Dorsolateral prefrontal cortex (tissue), 120 donors: ENCODE measurements at regions of chrX and their contacts with region 1.

Region 1: DNA sequence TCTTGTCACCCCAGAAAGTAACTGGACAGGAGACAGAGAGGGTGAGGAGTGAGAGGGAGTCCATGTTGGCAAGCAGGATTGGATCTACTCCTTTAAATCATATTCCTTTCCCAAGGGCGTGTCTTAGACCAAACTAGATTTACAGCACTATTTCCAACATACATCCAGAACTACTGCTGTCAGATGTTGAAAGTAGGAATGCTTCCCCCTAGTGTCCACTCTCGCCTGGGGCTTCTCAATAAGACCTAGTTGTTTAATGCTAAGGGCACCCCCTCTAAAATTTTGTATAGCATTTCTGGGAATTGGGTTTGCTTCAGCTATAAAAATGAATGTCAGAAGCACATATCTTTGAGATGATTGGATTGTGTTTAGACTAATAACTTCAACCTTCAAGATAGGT is 13.3 kb downstream of the OFD1 start:
- DNase-seq: peak in 2 of 10 donors; percentile 63 to 65
- H3K4me3 ChIP-seq: no peak overlapping the region
- H3K27ac ChIP-seq: peak overlapping the region in 4 of 59 donors; percentile 7 to 53 (median 30)
- H3K27me3 ChIP-seq: peaks cover 0 to 29% (median 3%) of the 10 kb centered on the region in 45 donors
- CTCF ChIP-seq: peak in 54 of 56 donors; percentile 26 to 72 (median 53)

Region 2: DNA sequence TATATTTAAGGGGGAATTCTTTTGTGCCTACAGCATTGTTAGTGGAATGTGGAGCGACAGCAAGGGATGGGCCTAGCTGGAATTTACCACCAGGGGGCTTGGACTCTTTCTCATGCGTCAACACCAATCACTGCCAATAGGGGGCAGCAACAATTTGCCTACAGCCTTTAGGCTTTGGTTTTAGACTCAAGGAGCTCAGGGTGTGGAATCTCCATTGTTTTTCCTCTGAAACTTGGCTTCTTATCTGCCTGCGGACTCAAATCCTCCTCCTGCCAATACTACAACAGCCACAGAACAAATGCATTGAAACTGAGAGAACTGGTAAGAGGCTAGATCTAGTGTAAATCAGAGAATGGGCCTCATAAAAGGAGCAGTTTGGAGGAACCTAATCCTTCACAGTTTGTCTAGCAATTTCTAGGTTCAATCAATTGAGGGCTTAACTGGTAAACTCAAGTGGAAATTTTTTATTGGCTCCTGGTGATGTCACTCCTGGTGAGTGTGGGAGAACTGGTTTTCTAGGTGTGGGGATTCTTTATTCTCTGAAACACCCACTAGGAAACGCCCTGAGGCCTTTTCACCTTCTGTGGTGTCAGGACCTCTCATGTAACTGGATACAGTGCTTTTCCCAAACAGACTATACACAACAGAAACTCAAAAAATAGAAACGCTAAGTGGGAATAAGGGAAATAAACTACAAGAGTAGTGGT is 800.8 kb before region 1 on chrX:
- intact Hi-C with region 1: loop called in 1 of 2 experiments (anchors 10 kb)
- DNase-seq: peak in 3 of 10 donors; percentile 38 to 45 (median 44)
- H3K4me3 ChIP-seq: no peak overlapping the region
- H3K27ac ChIP-seq: peak overlapping the region in 3 of 59 donors; percentile 9 to 45 (median 28)
- H3K27me3 ChIP-seq: peaks cover 0 to 41% (median 4%) of the 10 kb centered on the region in 45 donors
- CTCF ChIP-seq: peak; percentile 42 to 93 (median 83)

Region 3: DNA sequence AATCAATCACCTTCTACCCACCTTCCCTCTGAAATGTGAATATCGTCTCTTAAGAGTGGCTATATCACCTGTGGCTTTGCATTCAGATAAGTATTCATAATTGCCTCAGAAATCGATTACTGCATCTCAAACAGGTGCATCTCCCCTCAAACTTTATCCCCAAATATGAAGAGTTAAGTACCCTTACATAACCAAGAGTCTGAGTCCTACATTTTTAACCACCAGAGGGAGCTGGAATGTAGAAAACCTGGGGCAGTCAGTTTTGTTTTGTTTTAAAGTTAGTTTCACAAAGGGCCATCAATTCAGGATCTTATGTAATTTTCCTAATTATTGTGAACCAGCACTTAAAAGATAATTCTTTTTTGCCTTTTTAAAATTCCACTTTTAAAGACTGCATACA is 89.2 kb before region 1 on chrX:
- intact Hi-C with region 1: loop called (anchors 5 kb)
- DNase-seq: no peak
- H3K4me3 ChIP-seq: peak overlapping the region in 2 of 59 donors; percentile 6 to 10
- H3K27ac ChIP-seq: peak overlapping the region in 44 of 59 donors; percentile 1 to 76 (median 39)
- H3K27me3 ChIP-seq: peaks cover 0 to 39% (median 0%) of the 10 kb centered on the region in 45 donors
- CTCF ChIP-seq: peak; percentile 38 to 94 (median 84)

Region 4: DNA sequence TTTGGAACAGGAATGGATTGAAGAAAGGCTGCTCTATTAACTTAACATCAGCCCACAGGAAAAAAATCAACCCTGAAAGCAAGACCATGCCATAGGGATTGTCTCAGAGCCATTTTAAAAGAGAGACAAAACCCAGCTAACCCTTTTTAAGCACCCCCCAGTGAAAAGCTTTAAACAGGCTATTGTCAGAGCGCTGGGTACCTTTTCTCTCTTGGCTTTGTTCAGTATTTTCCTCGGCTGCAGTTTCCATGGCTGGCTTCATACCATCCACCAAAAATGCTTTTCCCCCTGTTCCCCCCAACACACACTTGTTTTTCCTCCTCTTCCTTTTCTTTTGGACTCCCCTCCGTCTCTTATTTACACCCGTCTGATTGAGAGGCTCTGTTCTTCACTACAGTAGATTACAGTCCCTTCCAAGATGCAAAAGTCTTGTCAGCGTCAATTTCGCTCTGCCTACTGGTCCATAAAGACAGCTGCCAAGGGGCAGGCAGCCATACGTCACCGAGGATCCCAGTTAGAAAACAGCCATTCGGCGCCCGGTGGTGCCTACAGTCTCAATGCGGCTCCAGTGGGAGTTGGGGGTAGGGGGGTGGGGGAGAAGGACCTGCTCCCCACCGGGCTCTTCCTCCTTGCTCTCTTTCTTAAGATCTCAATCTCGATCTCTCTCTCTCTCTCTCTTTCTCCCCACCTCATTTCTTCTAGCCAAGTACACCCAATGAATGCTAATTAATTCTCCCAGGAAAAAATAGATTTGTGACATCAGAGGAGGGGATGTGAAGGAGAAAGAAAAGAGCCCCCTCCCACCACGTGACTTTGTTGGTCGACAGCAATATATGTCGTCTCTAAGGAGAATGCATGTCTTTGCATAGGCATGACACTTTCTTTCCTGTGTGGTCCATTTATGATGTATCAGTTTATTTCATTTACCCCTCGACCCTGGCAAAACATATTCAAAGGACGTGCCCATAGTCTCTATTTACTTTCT is 69.1 kb after region 1 on chrX and contains the start of gene GPM6B:
- intact Hi-C with region 1: no loop called
- DNase-seq: peak; percentile 33 to 72 (median 64)
- H3K4me3 ChIP-seq: peak within 1 kb of the TSS; percentile 23 to 69 (median 52)
- H3K27ac ChIP-seq: peak within 1 kb of the TSS; percentile 3 to 90 (median 78)
- H3K27me3 ChIP-seq: peaks cover 0 to 63% (median 11%) of the 10 kb centered on the region in 45 donors
- CTCF ChIP-seq: no peak
- total RNA-seq, gene GPM6B: 509 to 1,404 (median 816) TPM